Mammary epithelial cell (primary cell): ENCODE measurements at regions of chr3 and their contacts with region 1.

Region 1: DNA sequence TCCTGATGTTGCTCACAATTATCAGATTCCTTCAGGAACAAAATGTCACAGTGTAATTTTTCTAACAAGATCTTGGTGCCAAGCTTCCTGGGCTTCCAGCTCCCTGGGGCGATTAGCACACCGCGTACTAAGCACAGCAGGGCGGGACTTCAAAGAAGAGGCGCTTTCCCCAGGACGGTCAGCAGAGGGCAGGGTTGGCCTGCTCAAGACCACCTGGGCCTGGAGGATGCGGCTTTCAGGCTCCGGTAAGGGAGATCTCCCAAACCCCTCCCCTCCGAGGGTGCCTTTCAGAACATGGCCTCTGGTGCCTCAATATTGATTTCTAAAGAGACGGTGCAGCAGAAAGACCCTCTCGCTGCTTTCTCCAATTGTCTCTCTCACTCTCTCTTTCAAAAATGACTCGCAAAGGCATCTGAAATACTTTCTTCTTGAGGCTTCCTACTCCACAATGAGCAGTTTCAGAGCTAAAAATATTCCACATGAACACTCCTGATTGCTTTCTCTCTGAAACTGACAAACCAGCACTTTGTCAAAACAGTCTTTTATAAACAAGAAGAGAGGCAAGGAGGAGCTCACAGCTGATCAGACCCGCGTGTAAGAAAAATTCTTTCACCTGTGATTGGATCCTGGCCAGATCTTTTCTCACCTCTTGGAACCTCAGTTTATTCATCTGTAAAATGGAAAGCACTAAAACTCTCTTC is 154.0 kb downstream of the ADAMTS9 start:
- DNase-seq: peak; percentile 66
- H3K4me3 ChIP-seq: no peak overlapping the region
- H3K27ac ChIP-seq: no peak overlapping the region
- H3K4me1 ChIP-seq: no peaks in the 10 kb centered on the region
- H3K27me3 ChIP-seq: no peaks in the 10 kb centered on the region
- CTCF ChIP-seq: peak; percentile 80 to 96

Region 2: GRCh38 chr3:64666171-64666588 is 132.4 kb after region 1 on chr3:
- CTCF ChIA-PET with region 1: no interaction called
- dilution Hi-C with region 1: no loop called
- in situ Hi-C with region 1: no loop called
- intact Hi-C with region 1: loop called (anchors 1 kb)
- DNase-seq: peak; percentile 16
- H3K4me3 ChIP-seq: no peak overlapping the region
- H3K27ac ChIP-seq: peak overlapping the region; percentile 40
- H3K4me1 ChIP-seq: peaks cover 13% of the 10 kb centered on the region
- H3K27me3 ChIP-seq: no peaks in the 10 kb centered on the region
- CTCF ChIP-seq: no peak

Region 3: DNA sequence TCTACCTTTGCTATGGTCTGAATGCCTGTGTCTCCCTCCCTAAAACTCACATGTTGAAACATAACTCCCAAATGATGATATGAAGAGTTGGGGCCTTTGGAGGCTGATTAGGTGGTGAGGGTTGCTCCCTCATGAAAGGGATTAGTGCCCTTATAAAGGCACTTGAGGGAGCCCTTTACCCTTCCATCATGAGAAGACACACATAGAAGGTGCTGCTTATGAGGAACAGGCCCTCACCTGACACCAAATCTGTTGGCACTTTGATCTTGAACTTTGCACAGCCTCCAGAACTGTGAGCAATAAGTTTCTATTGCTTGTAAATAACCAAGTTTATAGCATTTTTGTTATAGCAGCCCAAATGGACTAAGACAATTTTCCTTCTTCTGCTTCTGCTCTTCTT is 230.2 kb after region 1 on chr3:
- CTCF ChIA-PET with region 1: no interaction called
- dilution Hi-C with region 1: no loop called
- in situ Hi-C with region 1: no loop called
- intact Hi-C with region 1: loop called (anchors 5 kb)
- DNase-seq: peak; percentile 24
- H3K4me3 ChIP-seq: no peak overlapping the region
- H3K27ac ChIP-seq: no peak overlapping the region
- H3K4me1 ChIP-seq: no peaks in the 10 kb centered on the region
- H3K27me3 ChIP-seq: no peaks in the 10 kb centered on the region
- CTCF ChIP-seq: peak; percentile 7 to 40

Region 4: GRCh38 chr3:65210026-65210814 is 676.5 kb after region 1 on chr3:
- CTCF ChIA-PET with region 1: no interaction called
- dilution Hi-C with region 1: no loop called
- in situ Hi-C with region 1: no loop called
- intact Hi-C with region 1: loop called (anchors 1 kb)
- DNase-seq: no peak
- H3K4me3 ChIP-seq: no peak overlapping the region
- H3K27ac ChIP-seq: no peak overlapping the region
- H3K4me1 ChIP-seq: no peaks in the 10 kb centered on the region
- H3K27me3 ChIP-seq: no peaks in the 10 kb centered on the region
- CTCF ChIP-seq: peak in 1 of 2 donors; percentile 35

Region 5: DNA sequence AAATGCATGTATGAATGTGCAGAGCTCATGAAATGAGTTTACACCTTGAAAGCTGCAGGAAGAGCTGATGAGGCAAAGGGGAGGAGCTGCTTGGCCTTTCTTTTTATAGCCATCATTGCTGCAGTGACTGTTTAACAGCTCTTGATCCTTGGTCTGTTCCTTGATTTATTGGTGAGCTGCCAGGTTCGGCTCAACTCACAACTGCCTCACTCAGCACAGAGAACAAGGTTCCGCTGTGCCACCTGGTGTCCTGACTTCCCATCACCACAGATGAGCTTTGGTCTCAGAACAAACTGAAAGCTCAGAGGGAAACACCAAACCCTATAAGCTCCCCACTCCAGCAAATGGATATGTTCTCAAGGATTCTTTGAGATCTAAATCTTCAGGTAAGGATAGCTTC is 878.8 kb after region 1 on chr3:
- CTCF ChIA-PET with region 1: no interaction called
- dilution Hi-C with region 1: no loop called
- in situ Hi-C with region 1: loop called in 1 of 2 experiments (anchors 25 kb)
- intact Hi-C with region 1: no loop called
- DNase-seq: no peak
- H3K4me3 ChIP-seq: no peak overlapping the region
- H3K27ac ChIP-seq: no peak overlapping the region
- H3K4me1 ChIP-seq: no peaks in the 10 kb centered on the region
- H3K27me3 ChIP-seq: no peaks in the 10 kb centered on the region
- CTCF ChIP-seq: peak in 1 of 2 donors; percentile 8

Region 6: GRCh38 chr3:65732051-65732935 is 1198.5 kb after region 1 on chr3:
- CTCF ChIA-PET with region 1: no interaction called
- dilution Hi-C with region 1: no loop called
- in situ Hi-C with region 1: loop called in 1 of 2 experiments (anchors 25 kb)
- intact Hi-C with region 1: loop called (anchors 5 kb)
- DNase-seq: peak; percentile 52
- H3K4me3 ChIP-seq: no peak overlapping the region
- H3K27ac ChIP-seq: no peak overlapping the region
- H3K4me1 ChIP-seq: no peaks in the 10 kb centered on the region
- H3K27me3 ChIP-seq: no peaks in the 10 kb centered on the region
- CTCF ChIP-seq: peak; percentile 82 to 88